Tibial artery (tissue), 4 donors: ENCODE measurements at regions of chr16 and their contacts with region 1.

Region 1: GRCh38 chr16:11535471-11535870 is 51.2 kb downstream of the LITAF start:
- DNase-seq: no peak
- H3K4me3 ChIP-seq: no peak overlapping the region
- H3K27ac ChIP-seq: no peak overlapping the region
- H3K4me1 ChIP-seq: peaks cover 0 to 13% (median 8%) of the 10 kb centered on the region in 4 donors
- H3K27me3 ChIP-seq: no peaks in the 10 kb centered on the region
- CTCF ChIP-seq: no peak

Region 2: DNA sequence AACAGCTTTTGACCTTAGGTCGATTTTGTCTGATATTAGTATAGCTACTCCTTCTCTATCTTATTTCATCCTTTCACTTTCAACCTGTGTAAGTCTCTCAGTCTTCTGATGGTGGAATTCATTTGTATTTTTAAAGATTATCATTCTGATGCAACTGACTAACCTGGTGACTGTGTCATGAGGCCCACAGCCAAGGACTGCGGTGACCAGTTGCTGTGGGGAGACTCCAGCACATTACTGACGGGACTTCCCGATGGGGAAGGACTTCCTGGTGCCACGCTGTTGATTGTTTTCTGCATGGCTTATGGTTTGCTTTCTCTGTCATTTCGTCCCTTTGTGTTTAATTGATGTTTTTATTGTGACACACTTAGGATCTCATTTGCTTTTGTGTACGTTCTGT is 156.1 kb before region 1 on chr16:
- intact Hi-C with region 1: no loop called
- DNase-seq: no peak
- H3K4me3 ChIP-seq: no peak overlapping the region
- H3K27ac ChIP-seq: no peak overlapping the region
- H3K4me1 ChIP-seq: no peaks in the 10 kb centered on the region
- H3K27me3 ChIP-seq: no peaks in the 10 kb centered on the region
- CTCF ChIP-seq: no peak

Region 3: DNA sequence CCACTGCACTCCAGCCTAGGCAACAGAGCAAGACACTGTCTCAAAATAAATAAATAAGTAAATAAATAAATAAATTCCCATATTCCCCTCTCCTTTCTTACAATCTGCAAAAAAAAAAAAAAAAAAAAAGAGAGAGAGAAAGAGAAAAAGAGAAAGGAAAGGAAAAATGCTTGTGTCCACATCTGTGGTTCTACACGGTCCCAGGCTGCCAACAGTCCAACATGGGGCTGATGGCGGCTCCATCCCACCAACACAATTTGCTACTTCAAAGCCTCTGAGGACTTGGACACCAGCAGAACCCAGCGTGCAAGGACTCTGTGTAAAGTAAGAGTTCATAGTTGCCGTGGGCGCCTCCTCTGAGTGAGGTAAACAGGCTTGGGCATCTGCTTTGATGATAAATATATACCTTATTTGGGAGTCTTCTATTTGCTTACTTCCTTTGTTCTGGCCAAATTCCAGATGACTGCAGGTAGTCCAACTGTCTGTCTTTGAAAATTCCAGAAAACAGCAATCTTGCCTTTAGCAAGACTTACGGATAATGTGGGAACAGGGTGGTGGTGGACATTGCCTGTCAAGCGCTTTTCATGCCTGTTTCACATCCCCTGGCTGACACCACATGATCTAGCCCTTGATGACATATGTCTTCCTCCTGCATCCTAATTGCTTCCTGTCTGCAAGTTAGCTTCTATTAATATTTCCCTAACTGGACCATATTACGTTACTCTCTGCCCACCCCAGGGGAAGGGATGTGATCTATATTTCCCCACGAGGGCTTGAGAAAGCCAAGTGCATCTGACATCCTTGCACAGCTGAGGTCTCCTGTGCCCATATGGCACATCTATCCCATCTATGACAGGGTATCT is 41.2 kb after region 1 on chr16:
- intact Hi-C with region 1: loop called (anchors 5 kb)
- DNase-seq: no peak
- H3K4me3 ChIP-seq: no peak overlapping the region
- H3K27ac ChIP-seq: no peak overlapping the region
- H3K4me1 ChIP-seq: peaks cover 0 to 61% (median 40%) of the 10 kb centered on the region in 4 donors
- H3K27me3 ChIP-seq: no peaks in the 10 kb centered on the region
- CTCF ChIP-seq: no peak

Region 4: DNA sequence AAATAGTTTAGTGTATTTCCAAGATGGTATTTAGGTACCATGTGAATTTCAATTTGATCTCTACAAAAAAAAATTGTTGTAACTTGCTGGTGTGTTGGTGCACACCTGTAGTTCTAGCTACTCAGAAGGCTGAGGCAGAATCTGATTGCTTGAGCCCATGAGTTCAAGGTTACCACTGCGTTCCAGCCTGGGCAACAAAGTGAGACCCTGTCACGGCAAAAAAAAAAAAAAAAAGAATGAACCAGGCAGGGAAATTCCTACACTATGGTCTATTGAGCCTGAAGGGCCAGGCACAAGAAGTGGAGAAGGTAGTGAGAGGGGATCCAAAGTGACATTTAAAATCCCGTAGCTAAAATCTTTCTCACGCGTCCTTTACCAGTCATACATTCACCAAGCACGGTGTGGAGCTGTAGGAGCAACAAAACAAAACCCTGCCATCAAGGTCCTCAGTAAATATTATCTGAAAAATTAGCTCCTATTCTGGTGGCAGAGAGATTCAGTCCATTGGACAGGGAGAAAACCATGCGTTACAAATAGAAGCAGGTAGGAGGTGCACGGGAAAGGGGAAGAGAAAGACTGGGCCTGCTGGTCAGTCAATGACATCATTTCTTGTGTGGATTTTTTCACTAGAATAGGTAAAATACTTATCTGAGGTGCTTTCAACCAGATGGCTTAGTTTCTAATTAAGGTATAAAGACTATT is 179.9 kb after region 1 on chr16:
- intact Hi-C with region 1: loop called (anchors 10 kb)
- DNase-seq: no peak
- H3K4me3 ChIP-seq: no peak overlapping the region
- H3K27ac ChIP-seq: no peak overlapping the region
- H3K4me1 ChIP-seq: peaks cover 0 to 9% (median 2%) of the 10 kb centered on the region in 4 donors
- H3K27me3 ChIP-seq: no peaks in the 10 kb centered on the region
- CTCF ChIP-seq: no peak